PC-3 (cell line): ENCODE measurements at regions of chr22 and their contacts with region 1.

Region 1: DNA sequence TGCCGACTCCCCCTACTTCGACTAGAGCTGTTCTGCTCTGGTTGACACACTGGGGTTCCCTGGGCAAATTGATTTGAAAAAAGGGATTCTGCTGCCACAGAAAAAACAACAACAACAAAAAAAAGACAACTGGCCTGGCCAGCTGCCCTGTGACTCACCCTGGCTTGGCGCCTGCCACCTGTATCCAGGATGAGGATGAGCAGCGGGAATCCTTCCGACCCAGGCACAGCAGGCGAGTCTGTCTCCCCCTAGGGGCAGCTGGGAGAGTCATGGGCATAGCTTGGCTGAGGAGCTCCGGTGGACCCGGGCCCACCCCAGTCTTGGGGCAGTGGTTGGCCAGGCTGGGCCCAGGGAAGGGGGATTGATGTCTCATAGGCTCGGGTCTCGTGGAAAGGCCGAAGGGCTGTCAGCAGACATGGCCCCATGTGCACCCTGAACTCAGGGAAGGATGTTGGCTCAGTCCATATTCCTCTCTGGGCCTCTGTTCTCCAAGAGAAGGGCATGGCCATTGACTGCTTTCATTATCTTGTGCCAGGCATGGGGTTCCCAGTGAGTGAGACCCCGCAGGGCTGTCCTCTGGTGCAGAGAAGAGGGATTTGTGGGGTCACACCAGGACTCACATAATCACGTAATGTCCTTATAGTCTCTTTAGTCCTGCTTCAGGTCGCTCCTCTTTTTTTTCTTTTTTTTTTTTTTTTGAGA is 10.4 kb upstream of the SUN2 start:
- DNase-seq: peak; percentile 82
- ATAC-seq: peak; percentile 81
- H3K4me3 ChIP-seq: no peak overlapping the region
- H3K27ac ChIP-seq: no peak overlapping the region
- H3K4me1 ChIP-seq: peaks cover 11% of the 10 kb centered on the region
- H3K27me3 ChIP-seq: no peaks in the 10 kb centered on the region
- CTCF ChIP-seq: peak; percentile 88

Region 2: DNA sequence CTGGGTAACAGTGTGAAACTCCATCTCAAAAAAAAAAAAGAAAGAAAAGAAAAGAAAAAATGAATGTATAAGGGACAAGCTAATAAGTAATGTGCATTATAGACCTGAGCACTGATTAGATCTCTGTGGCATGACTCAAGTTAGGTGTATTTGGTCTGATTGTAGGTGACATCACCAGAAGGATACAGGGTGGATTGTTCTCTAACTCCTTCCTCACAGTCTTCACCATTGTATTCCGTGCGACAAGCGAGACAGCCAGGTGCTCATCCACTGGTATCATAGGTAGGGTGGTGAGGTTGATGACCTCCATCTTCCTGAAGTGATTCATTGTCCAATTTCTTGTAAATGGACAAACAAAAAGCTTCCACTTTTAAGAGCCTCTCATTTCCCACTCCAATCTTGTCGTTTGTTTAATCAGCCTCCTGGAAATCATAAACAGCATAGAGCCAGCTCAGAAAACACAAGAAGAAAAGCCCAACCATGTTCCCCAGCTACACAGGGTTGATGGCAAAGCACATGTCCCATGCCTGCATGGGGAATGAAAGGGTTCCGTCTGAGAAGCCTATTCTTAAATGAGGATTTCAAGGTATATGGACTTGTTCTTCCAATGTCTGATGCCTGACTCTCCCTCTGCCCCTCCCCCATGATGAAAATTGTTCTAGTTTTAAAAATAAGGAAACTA is 116.2 kb before region 1 on chr22:
- CTCF ChIA-PET with region 1: no interaction called
- POLR2A ChIA-PET with region 1: no interaction called
- intact Hi-C with region 1: no loop called
- DNase-seq: peak; percentile 59
- ATAC-seq: peak; percentile 68
- H3K4me3 ChIP-seq: no peak overlapping the region
- H3K27ac ChIP-seq: peak overlapping the region; percentile 78
- H3K4me1 ChIP-seq: peaks cover 8% of the 10 kb centered on the region; the same call in 1 of the 2 replicates
- H3K27me3 ChIP-seq: no peaks in the 10 kb centered on the region
- CTCF ChIP-seq: no peak

Region 3: DNA sequence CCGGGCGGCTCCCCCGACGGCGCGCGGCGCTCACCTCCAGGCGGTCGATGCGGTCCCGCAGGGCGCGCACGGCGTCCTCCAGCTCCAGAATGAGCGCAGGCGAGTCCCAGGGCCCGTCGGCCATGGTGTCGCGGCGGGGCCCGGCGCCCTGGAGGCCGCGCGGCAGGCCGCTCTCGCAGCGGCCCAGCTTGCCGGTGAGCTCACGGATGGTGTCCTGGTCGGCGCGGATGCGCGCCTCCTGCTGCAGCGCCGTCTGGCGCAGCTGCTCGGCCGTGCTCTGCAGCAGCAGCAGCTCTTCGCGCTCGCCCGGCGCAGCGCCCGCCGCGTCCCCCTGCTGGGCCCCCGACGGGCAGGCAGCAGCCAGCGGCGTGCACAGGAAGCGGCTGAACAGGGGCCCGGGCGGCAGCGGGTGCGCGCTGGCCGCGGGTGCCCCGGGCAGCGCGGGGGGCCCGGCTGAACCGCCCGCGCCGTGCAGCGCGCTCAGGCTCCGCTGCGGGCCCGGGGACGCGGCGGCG is 77.0 kb after region 1 on chr22:
- CTCF ChIA-PET with region 1: interaction called, 15 read pairs
- POLR2A ChIA-PET with region 1: no interaction called
- intact Hi-C with region 1: no loop called
- DNase-seq: peak; percentile 55
- ATAC-seq: peak; percentile 82
- H3K4me3 ChIP-seq: peak overlapping the region; percentile 68
- H3K27ac ChIP-seq: no peak overlapping the region
- H3K4me1 ChIP-seq: peaks cover 9% of the 10 kb centered on the region; the same call in 1 of the 2 replicates
- H3K27me3 ChIP-seq: no peaks in the 10 kb centered on the region
- CTCF ChIP-seq: no peak